GM12878 (cell line): ENCODE measurements at regions of chr6 and their contacts with region 1.

Region 1: DNA sequence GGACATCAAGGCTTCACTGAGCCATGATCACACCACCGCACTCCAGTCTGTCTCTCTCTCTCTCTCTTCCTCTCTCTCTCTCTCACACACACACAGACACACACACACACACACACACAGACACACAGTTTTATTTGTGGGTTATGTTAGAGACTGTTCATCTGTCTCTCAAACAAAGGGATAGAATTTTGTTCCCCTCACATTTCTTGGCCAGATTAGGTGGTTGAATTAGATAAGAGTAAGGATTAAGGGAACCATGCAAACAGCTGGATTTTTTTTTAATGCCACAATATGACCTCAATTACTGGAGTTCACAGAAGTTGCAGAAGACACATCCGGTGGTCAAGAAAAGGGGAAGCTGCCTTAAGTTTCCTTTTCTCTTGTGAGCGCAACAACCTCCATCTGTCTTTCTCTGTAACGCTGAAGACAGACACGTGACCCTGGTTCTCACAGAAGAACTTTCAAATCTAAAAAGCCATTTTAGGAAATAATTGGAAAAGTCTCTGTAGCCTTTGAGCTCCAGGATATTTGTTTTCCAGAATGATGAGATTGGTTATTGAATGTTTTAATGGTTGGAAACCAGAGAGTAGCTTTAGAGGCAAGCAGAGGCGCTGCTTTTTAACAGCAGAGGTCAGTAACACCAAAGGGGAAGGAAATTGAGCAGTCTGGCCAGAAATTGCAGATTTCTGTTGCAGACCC is 33.0 kb upstream of the LGSN start:
- DNase-seq: peak; percentile 88
- ATAC-seq: peak; percentile 94
- H3K4me3 ChIP-seq: peak overlapping the region; percentile 56
- H3K27ac ChIP-seq: peak overlapping the region; percentile 95
- H3K4me1 ChIP-seq: peaks cover 11% of the 10 kb centered on the region
- H3K27me3 ChIP-seq: no peaks in the 10 kb centered on the region
- CTCF ChIP-seq: peak; percentile 62 to 90 (median 82)
- EP300 ChIP-seq: peak; percentile 89 to 93
- POLR2A ChIP-seq: no peak
- RAD21 ChIP-seq: peak; percentile 98

Region 2: DNA sequence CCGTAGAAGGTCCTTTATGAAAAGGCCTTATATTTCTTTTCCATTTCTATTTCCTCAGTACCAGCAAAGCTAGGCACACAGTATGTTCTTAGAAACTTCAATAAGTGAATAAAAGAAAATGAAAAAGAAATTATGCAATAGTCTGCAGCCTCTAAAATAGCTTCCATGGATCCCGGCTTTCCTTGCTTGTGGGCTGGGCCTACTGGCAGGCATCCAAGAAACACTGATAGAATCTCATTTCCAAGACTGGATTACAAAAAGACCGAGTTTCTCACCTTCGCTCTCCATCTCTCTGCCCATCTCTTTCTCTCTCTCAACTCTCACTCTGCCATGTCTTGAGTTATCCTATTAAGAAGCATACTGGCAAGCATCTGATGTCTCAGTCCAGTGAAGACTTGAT is 329.0 kb before region 1 on chr6:
- CTCF ChIA-PET with region 1: no interaction called
- POLR2A ChIA-PET with region 1: no interaction called
- RAD21 ChIA-PET with region 1: no interaction called
- SMC1A ChIA-PET with region 1: no interaction called
- in situ Hi-C with region 1: no loop called
- intact Hi-C with region 1: no loop called
- DNase-seq: no peak
- ATAC-seq: no peak
- H3K4me3 ChIP-seq: no peak overlapping the region
- H3K27ac ChIP-seq: no peak overlapping the region
- H3K4me1 ChIP-seq: no peaks in the 10 kb centered on the region
- H3K27me3 ChIP-seq: no peaks in the 10 kb centered on the region
- CTCF ChIP-seq: no peak
- EP300 ChIP-seq: no peak
- POLR2A ChIP-seq: no peak
- RAD21 ChIP-seq: no peak

Region 3: GRCh38 chr6:63289269-63289872 is 63.4 kb before region 1 on chr6:
- CTCF ChIA-PET with region 1: no interaction called
- POLR2A ChIA-PET with region 1: no interaction called
- RAD21 ChIA-PET with region 1: no interaction called
- SMC1A ChIA-PET with region 1: no interaction called
- in situ Hi-C with region 1: no loop called
- intact Hi-C with region 1: no loop called
- DNase-seq: no peak
- ATAC-seq: no peak
- H3K4me3 ChIP-seq: no peak overlapping the region
- H3K27ac ChIP-seq: no peak overlapping the region
- H3K4me1 ChIP-seq: no peaks in the 10 kb centered on the region
- H3K27me3 ChIP-seq: no peaks in the 10 kb centered on the region
- CTCF ChIP-seq: no peak
- EP300 ChIP-seq: no peak
- POLR2A ChIP-seq: no peak
- RAD21 ChIP-seq: no peak

Region 4: DNA sequence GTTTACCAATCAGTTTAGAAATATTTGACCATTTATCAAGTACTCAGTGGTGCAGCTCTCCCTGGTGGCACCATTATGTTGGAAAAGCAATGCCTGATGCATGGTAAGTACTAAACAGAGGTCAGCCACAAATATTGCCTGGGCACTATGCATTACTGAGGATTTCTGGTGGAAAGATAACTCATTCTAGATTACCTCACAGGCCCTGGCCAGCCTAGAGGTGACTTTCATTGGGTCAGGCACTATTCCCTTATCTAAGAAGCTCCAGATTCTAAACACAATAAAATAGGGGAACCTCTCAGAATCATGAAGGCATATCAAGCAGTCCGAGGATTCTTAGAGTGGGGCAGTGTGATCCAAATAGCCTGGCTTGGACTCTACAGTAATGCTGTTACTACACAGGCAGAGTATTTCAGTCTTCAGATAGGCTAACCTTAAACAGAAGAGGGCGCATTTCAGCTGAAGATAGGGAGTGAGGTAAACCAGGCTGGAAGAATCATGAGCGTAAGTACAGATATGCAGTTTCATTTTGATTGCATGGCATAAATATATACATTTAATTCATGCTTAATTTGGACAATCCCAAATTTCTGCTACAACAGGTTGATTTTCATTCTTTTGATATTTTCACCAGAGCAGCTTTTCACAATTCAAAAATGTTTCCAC is 45.0 kb before region 1 on chr6:
- CTCF ChIA-PET with region 1: interaction called, 22 read pairs
- POLR2A ChIA-PET with region 1: no interaction called
- RAD21 ChIA-PET with region 1: interaction called, 15 read pairs
- SMC1A ChIA-PET with region 1: interaction called, 20 read pairs
- in situ Hi-C with region 1: no loop called
- intact Hi-C with region 1: no loop called
- DNase-seq: peak; percentile 13
- ATAC-seq: peak; percentile 99
- H3K4me3 ChIP-seq: no peak overlapping the region
- H3K27ac ChIP-seq: no peak overlapping the region
- H3K4me1 ChIP-seq: no peaks in the 10 kb centered on the region
- H3K27me3 ChIP-seq: no peaks in the 10 kb centered on the region
- CTCF ChIP-seq: peak; percentile 60 to 70 (median 63)
- EP300 ChIP-seq: no peak
- POLR2A ChIP-seq: no peak
- RAD21 ChIP-seq: peak; percentile 76

Region 5: DNA sequence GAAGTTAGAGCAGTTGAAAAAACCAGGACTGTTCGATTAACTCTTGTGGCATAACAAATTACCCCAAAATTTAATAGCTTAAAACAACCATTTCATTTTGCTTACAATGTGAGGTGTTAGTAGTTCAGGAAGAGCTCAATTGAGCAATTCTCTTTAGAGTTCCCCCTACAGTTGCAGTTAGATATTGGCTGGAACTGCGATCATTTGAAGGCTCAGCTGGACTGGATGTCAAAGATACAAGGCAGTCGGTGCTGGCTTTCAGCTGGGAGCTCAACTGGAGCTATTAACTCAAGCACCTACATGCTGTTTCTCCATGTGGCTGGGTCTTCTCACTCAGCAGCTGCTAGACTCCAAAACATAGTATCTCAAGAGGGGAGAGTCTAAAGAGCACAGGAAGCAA is 123.6 kb after region 1 on chr6:
- CTCF ChIA-PET with region 1: interaction called, 15 read pairs
- POLR2A ChIA-PET with region 1: interaction called, 6 read pairs
- RAD21 ChIA-PET with region 1: interaction called, 7 read pairs
- SMC1A ChIA-PET with region 1: interaction called, 6 read pairs
- in situ Hi-C with region 1: no loop called
- intact Hi-C with region 1: no loop called
- DNase-seq: no peak
- ATAC-seq: peak; percentile 48; the same call in 2 of the 3 replicates
- H3K4me3 ChIP-seq: no peak overlapping the region
- H3K27ac ChIP-seq: no peak overlapping the region
- H3K4me1 ChIP-seq: no peaks in the 10 kb centered on the region
- H3K27me3 ChIP-seq: no peaks in the 10 kb centered on the region
- CTCF ChIP-seq: no peak
- EP300 ChIP-seq: no peak
- POLR2A ChIP-seq: no peak
- RAD21 ChIP-seq: no peak

Region 6: GRCh38 chr6:63537126-63537958 is 184.6 kb after region 1 on chr6:
- CTCF ChIA-PET with region 1: interaction called, 7 read pairs
- POLR2A ChIA-PET with region 1: no interaction called
- RAD21 ChIA-PET with region 1: interaction called, 9 read pairs
- SMC1A ChIA-PET with region 1: interaction called, 20 read pairs
- in situ Hi-C with region 1: no loop called
- intact Hi-C with region 1: no loop called
- DNase-seq: peak; percentile 36
- ATAC-seq: peak; percentile 93
- H3K4me3 ChIP-seq: no peak overlapping the region
- H3K27ac ChIP-seq: no peak overlapping the region
- H3K4me1 ChIP-seq: peaks cover 9% of the 10 kb centered on the region
- H3K27me3 ChIP-seq: no peaks in the 10 kb centered on the region
- CTCF ChIP-seq: no peak
- EP300 ChIP-seq: peak; percentile 38 to 78; a peak in 3 of 4 replicates
- POLR2A ChIP-seq: no peak
- RAD21 ChIP-seq: no peak

Region 7: GRCh38 chr6:63584125-63584514 is 231.4 kb after region 1 on chr6:
- CTCF ChIA-PET with region 1: interaction called, 8 read pairs
- POLR2A ChIA-PET with region 1: no interaction called
- RAD21 ChIA-PET with region 1: interaction called, 12 read pairs
- SMC1A ChIA-PET with region 1: interaction called, 9 read pairs
- in situ Hi-C with region 1: no loop called
- intact Hi-C with region 1: no loop called
- DNase-seq: no peak
- ATAC-seq: peak; percentile 14
- H3K4me3 ChIP-seq: no peak overlapping the region
- H3K27ac ChIP-seq: no peak overlapping the region
- H3K4me1 ChIP-seq: no peaks in the 10 kb centered on the region
- H3K27me3 ChIP-seq: no peaks in the 10 kb centered on the region
- CTCF ChIP-seq: no peak
- EP300 ChIP-seq: no peak
- POLR2A ChIP-seq: no peak
- RAD21 ChIP-seq: no peak

Region 8: GRCh38 chr6:63685446-63686379 is 333.0 kb after region 1 on chr6:
- CTCF ChIA-PET with region 1: interaction called, 14 read pairs
- POLR2A ChIA-PET with region 1: no interaction called
- RAD21 ChIA-PET with region 1: interaction called, 15 read pairs
- SMC1A ChIA-PET with region 1: interaction called, 16 read pairs
- in situ Hi-C with region 1: no loop called
- intact Hi-C with region 1: no loop called
- DNase-seq: peak; percentile 35
- ATAC-seq: peak; percentile 88
- H3K4me3 ChIP-seq: peak overlapping the region; percentile 14; the same call in 1 of the 2 replicates
- H3K27ac ChIP-seq: peak overlapping the region; percentile 78
- H3K4me1 ChIP-seq: peaks cover 17% of the 10 kb centered on the region
- H3K27me3 ChIP-seq: no peaks in the 10 kb centered on the region
- CTCF ChIP-seq: no peak
- EP300 ChIP-seq: no peak
- POLR2A ChIP-seq: no peak
- RAD21 ChIP-seq: no peak

Region 9: GRCh38 chr6:63816982-63817436 is 464.3 kb after region 1 on chr6:
- CTCF ChIA-PET with region 1: interaction called, 24 read pairs
- POLR2A ChIA-PET with region 1: no interaction called
- RAD21 ChIA-PET with region 1: interaction called, 9 read pairs
- SMC1A ChIA-PET with region 1: interaction called, 10 read pairs
- in situ Hi-C with region 1: no loop called
- intact Hi-C with region 1: no loop called
- DNase-seq: no peak
- ATAC-seq: peak; percentile 83
- H3K4me3 ChIP-seq: no peak overlapping the region
- H3K27ac ChIP-seq: no peak overlapping the region
- H3K4me1 ChIP-seq: no peaks in the 10 kb centered on the region
- H3K27me3 ChIP-seq: peaks cover 0 to 3% of the 10 kb centered on the region in 2 experiments; a peak in 1 of 4 replicates
- CTCF ChIP-seq: peak; percentile 6 to 31 (median 22); a peak in 2 of 6 replicates
- EP300 ChIP-seq: no peak
- POLR2A ChIP-seq: no peak
- RAD21 ChIP-seq: 0 out of 2 replicates have a peak, but pooled peaks have one; percentile 6